Heart right ventricle (tissue), 16 donors: ENCODE measurements at regions of chr19 and their contacts with region 1.

Region 1: GRCh38 chr19:52922841-52923777 is at the start of gene ZNF888:
- DNase-seq: peak; percentile 80 to 91
- ATAC-seq: peak; percentile 98 to 100 (median 99)
- H3K4me3 ChIP-seq: peak within 1 kb of the TSS; percentile 54 to 89 (median 75)
- H3K27ac ChIP-seq: peak within 1 kb of the TSS in 9 of 10 donors; percentile 14 to 90 (median 79)
- H3K4me1 ChIP-seq: peaks cover 0 to 23% (median 13%) of the 10 kb centered on the region in 9 donors
- H3K27me3 ChIP-seq: no peaks in the 10 kb centered on the region
- CTCF ChIP-seq: no peak
- total RNA-seq, gene ZNF888: 0.76 to 2.3 (median 1.4) TPM

Region 2: GRCh38 chr19:52942386-52943133 is 19.5 kb after region 1 on chr19:
- intact Hi-C with region 1: loop called in 1 of 10 experiments (anchors 2 kb)
- DNase-seq: peak; percentile 92 to 94
- ATAC-seq: peak; percentile 97 to 100 (median 98)
- H3K4me3 ChIP-seq: peak overlapping the region; percentile 40 to 91 (median 80)
- H3K27ac ChIP-seq: peak overlapping the region in 9 of 10 donors; percentile 72 to 91 (median 85)
- H3K4me1 ChIP-seq: peaks cover 0 to 27% (median 9%) of the 10 kb centered on the region in 9 donors
- H3K27me3 ChIP-seq: no peaks in the 10 kb centered on the region
- CTCF ChIP-seq: no peak

Region 3: GRCh38 chr19:53103198-53103944 is 180.3 kb after region 1 on chr19 and contains the start of gene ZNF160:
- intact Hi-C with region 1: no loop called
- DNase-seq: peak; percentile 100
- ATAC-seq: peak; percentile 99
- H3K4me3 ChIP-seq: peak within 1 kb of the TSS; percentile 75 to 97 (median 85)
- H3K27ac ChIP-seq: peak within 1 kb of the TSS; percentile 84 to 98 (median 94)
- H3K4me1 ChIP-seq: peaks cover 9 to 46% (median 25%) of the 10 kb centered on the region in 9 donors
- H3K27me3 ChIP-seq: no peaks in the 10 kb centered on the region
- CTCF ChIP-seq: no peak
- total RNA-seq, gene ZNF160: 9.8 to 22.9 (median 18.5) TPM